Caco-2 (cell line): ENCODE measurements at regions of chr1 and their contacts with region 1.

Region 1: GRCh38 chr1:204806943-204807687 is 63.5 kb upstream of the NFASC start:
- DNase-seq: peak; percentile 86 to 90
- H3K4me3 ChIP-seq: peak overlapping the region; percentile 34
- H3K4me3 Mint-ChIP-seq: peak overlapping the region; percentile 70
- H3K27ac Mint-ChIP-seq: no peak overlapping the region
- H3K4me1 ChIP-seq: no peaks in the 10 kb centered on the region
- H3K4me1 Mint-ChIP-seq: no peaks in the 10 kb centered on the region
- H3K27me3 ChIP-seq: no peaks in the 10 kb centered on the region
- H3K27me3 Mint-ChIP-seq: peaks cover 6% of the 10 kb centered on the region
- CTCF ChIP-seq: peak; percentile 99

Region 2: GRCh38 chr1:204506961-204507387 is 300.1 kb before region 1 on chr1:
- CTCF ChIA-PET with region 1: interaction called, 6 read pairs
- POLR2A ChIA-PET with region 1: no interaction called
- intact Hi-C with region 1: loop called (anchors 5 kb)
- DNase-seq: peak; percentile 83 to 91
- H3K4me3 ChIP-seq: peak overlapping the region; percentile 58
- H3K4me3 Mint-ChIP-seq: peak overlapping the region; percentile 99
- H3K27ac Mint-ChIP-seq: peak overlapping the region; percentile 98
- H3K4me1 ChIP-seq: peaks cover 4% of the 10 kb centered on the region; the same call in 1 of the 2 replicates
- H3K4me1 Mint-ChIP-seq: peaks cover 20% of the 10 kb centered on the region
- H3K27me3 ChIP-seq: no peaks in the 10 kb centered on the region
- H3K27me3 Mint-ChIP-seq: peaks cover 8% of the 10 kb centered on the region
- CTCF ChIP-seq: no peak

Region 3: GRCh38 chr1:204623894-204624361 is 183.2 kb before region 1 on chr1:
- CTCF ChIA-PET with region 1: interaction called, 19 read pairs
- POLR2A ChIA-PET with region 1: no interaction called
- intact Hi-C with region 1: no loop called
- DNase-seq: peak; percentile 65
- H3K4me3 ChIP-seq: no peak overlapping the region
- H3K4me3 Mint-ChIP-seq: no peak overlapping the region
- H3K27ac Mint-ChIP-seq: no peak overlapping the region
- H3K4me1 ChIP-seq: peaks cover 29% of the 10 kb centered on the region
- H3K4me1 Mint-ChIP-seq: peaks cover 26% of the 10 kb centered on the region
- H3K27me3 ChIP-seq: no peaks in the 10 kb centered on the region
- H3K27me3 Mint-ChIP-seq: no peaks in the 10 kb centered on the region
- CTCF ChIP-seq: peak; percentile 48 to 55

Region 4: DNA sequence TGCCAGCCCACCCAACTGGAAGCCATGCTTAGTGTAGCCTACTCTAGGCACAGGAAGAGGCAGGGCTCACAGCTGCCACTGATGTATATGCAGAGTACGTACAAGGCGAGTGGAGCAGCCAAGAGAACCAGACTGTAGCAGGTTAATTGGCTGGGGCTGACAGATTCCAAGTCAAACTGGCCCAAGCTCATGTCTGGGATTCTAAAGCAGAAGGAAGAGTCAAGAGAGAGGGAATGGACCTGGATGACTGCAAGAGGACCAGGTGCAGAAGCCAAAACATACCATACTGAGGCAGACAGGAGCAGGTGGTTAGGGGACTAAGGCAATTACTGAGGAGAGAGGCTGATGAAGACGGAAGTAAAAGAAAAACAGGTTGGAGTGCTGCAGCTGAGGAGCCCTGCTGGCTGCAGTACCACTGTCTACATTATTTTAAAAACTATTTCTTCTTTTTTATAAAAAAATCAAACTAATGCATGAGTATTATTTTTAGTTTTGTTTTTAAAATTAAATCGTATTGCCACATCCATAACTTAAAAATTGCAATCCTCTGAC is 70.2 kb before region 1 on chr1:
- CTCF ChIA-PET with region 1: no interaction called
- POLR2A ChIA-PET with region 1: no interaction called
- intact Hi-C with region 1: no loop called
- DNase-seq: no peak
- H3K4me3 ChIP-seq: no peak overlapping the region
- H3K4me3 Mint-ChIP-seq: no peak overlapping the region
- H3K27ac Mint-ChIP-seq: no peak overlapping the region
- H3K4me1 ChIP-seq: no peaks in the 10 kb centered on the region
- H3K4me1 Mint-ChIP-seq: no peaks in the 10 kb centered on the region
- H3K27me3 ChIP-seq: no peaks in the 10 kb centered on the region; the same call in 1 of the 2 replicates
- H3K27me3 Mint-ChIP-seq: peaks cover 25% of the 10 kb centered on the region
- CTCF ChIP-seq: no peak

Region 5: DNA sequence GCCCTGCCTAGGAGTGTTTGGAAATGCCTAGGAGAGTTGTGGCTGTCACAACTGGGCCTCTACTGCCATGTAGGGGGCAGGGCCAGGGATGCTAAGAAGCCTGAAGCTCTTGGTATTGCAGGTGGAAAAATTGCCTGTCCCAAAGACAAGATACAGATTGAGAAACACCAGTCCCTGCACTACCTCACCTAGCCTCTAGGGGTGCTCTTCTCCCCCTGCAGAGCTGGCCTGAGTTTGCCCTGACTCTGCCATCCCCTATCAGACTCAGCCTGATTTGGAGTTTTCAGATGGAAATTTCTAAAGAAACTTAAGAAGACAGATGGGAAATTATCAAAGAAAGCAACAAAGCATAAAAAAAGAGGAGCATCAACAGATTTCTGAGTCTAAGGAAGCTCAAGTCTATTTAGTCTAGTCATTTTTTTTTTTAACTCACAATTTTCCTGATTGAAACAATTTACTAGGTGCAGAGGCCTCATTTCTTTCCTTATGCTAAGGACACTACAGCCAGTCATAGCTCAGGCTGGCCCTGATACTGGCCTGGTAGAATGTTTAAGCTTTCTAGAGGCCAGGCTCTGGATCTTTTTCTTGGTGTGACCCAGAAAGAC is 60.2 kb before region 1 on chr1:
- CTCF ChIA-PET with region 1: interaction called, 11 read pairs
- POLR2A ChIA-PET with region 1: no interaction called
- intact Hi-C with region 1: loop called (anchors 2 kb)
- DNase-seq: peak; percentile 51 to 58
- H3K4me3 ChIP-seq: no peak overlapping the region
- H3K4me3 Mint-ChIP-seq: no peak overlapping the region
- H3K27ac Mint-ChIP-seq: no peak overlapping the region
- H3K4me1 ChIP-seq: no peaks in the 10 kb centered on the region
- H3K4me1 Mint-ChIP-seq: no peaks in the 10 kb centered on the region
- H3K27me3 ChIP-seq: no peaks in the 10 kb centered on the region
- H3K27me3 Mint-ChIP-seq: peaks cover 18% of the 10 kb centered on the region
- CTCF ChIP-seq: peak; percentile 95

Region 6: DNA sequence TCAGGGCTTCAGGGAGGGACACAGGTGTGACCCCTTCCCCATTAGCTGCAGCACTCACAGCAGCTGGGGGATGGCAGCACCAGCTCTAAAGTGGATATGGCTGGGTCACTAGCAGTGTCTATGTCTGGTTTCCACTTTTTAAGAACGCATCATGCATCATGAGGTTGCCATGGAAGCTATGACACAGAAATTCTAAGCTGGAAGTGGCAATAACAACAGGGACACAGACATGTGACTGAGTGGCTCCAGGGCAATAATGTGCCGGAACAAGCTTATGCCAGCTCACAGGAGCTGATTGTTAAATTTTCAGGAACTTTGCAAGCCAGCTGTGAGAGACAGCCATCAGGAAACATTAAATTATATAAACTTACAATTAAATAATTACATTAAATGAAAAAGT is 12.4 kb after region 1 on chr1:
- CTCF ChIA-PET with region 1: interaction called, 19 read pairs
- POLR2A ChIA-PET with region 1: no interaction called
- intact Hi-C with region 1: no loop called
- DNase-seq: no peak
- H3K4me3 ChIP-seq: no peak overlapping the region
- H3K4me3 Mint-ChIP-seq: no peak overlapping the region
- H3K27ac Mint-ChIP-seq: no peak overlapping the region
- H3K4me1 ChIP-seq: no peaks in the 10 kb centered on the region
- H3K4me1 Mint-ChIP-seq: no peaks in the 10 kb centered on the region
- H3K27me3 ChIP-seq: peaks cover 1% of the 10 kb centered on the region; the same call in 1 of the 2 replicates
- H3K27me3 Mint-ChIP-seq: peaks cover 14% of the 10 kb centered on the region
- CTCF ChIP-seq: no peak

Region 7: GRCh38 chr1:204941421-204942338 is 134.6 kb after region 1 on chr1:
- CTCF ChIA-PET with region 1: interaction called, 26 read pairs
- POLR2A ChIA-PET with region 1: no interaction called
- intact Hi-C with region 1: loop called (anchors 1 kb)
- DNase-seq: peak; percentile 61 to 76
- H3K4me3 ChIP-seq: no peak overlapping the region
- H3K4me3 Mint-ChIP-seq: no peak overlapping the region
- H3K27ac Mint-ChIP-seq: no peak overlapping the region
- H3K4me1 ChIP-seq: no peaks in the 10 kb centered on the region
- H3K4me1 Mint-ChIP-seq: no peaks in the 10 kb centered on the region
- H3K27me3 ChIP-seq: no peaks in the 10 kb centered on the region; the same call in 1 of the 2 replicates
- H3K27me3 Mint-ChIP-seq: peaks cover 4% of the 10 kb centered on the region
- CTCF ChIP-seq: peak; percentile 94 to 96